ENCODE measurements at regions of chr2 and their contacts with region 1.

Region 1: GRCh38 chr2:127342101-127342500 is 45.7 kb downstream of the MAP3K2 start:
- DNase-seq: no peak
- H3K4me3 ChIP-seq: no peak overlapping the region
- H3K27ac ChIP-seq: no peak overlapping the region
- H3K4me1 ChIP-seq: no peaks in the 10 kb centered on the region
- H3K27me3 ChIP-seq: no peaks in the 10 kb centered on the region
- CTCF ChIP-seq: no peak
- EP300 ChIP-seq: no peak
- POLR2A ChIP-seq: no peak

Region 2: GRCh38 chr2:127185093-127185492 is 157.0 kb before region 1 on chr2:
- intact Hi-C with region 1: no loop called
- DNase-seq: no peak
- H3K4me3 ChIP-seq: no peak overlapping the region
- H3K27ac ChIP-seq: no peak overlapping the region
- H3K4me1 ChIP-seq: no peaks in the 10 kb centered on the region
- H3K27me3 ChIP-seq: no peaks in the 10 kb centered on the region
- CTCF ChIP-seq: no peak
- EP300 ChIP-seq: no peak
- POLR2A ChIP-seq: no peak

Region 3: DNA sequence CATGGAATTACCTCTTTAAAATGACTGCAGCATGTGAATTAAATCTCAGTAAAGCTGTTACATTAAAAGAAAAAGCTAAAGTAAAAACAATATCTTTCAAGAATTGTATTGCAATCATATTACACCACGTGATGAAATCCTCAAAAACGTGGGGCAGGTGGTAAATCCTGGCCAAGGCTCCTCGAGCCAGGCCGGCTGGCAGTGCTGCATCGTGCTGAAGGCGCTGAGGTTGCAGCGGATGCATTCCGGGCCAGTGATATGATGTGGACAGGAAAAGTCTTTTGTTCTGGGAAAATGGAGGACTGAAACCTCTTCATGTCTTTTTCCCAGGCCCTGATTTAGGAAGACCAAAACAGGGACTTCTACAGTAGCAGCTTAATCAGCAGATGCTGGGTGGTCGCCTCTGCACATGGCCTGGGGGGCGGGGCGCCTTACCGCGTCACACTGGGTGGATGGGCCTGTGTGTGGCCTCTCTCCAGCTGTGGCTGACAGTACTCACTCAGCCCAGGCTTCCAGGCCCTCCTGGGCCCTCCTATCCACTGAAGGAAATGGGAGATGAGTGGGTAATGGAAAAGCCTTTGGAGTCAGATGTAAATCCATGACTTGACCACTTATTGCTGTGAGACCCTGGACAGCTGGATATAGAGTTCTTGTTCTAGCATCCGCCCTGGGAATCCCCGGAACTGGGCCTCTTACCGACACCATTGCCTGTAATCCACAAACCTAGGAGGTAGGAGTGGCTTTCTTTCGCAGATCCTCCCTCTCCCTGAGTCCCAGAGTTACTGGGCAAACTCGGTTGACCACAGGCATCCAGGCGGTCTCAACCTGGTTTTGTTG is 121.3 kb after region 1 on chr2:
- intact Hi-C with region 1: loop called in 1 of 4 experiments (anchors 10 kb)
- DNase-seq: no peak
- H3K4me3 ChIP-seq: no peak overlapping the region
- H3K27ac ChIP-seq: no peak overlapping the region
- H3K4me1 ChIP-seq: no peaks in the 10 kb centered on the region
- H3K27me3 ChIP-seq: no peaks in the 10 kb centered on the region
- CTCF ChIP-seq: no peak
- EP300 ChIP-seq: no peak
- POLR2A ChIP-seq: no peak

Measured in ovary (tissue), 10 donors.